Sigmoid colon (tissue), 7 donors: ENCODE measurements at regions of chr3 and their contacts with region 1.

Region 1: DNA sequence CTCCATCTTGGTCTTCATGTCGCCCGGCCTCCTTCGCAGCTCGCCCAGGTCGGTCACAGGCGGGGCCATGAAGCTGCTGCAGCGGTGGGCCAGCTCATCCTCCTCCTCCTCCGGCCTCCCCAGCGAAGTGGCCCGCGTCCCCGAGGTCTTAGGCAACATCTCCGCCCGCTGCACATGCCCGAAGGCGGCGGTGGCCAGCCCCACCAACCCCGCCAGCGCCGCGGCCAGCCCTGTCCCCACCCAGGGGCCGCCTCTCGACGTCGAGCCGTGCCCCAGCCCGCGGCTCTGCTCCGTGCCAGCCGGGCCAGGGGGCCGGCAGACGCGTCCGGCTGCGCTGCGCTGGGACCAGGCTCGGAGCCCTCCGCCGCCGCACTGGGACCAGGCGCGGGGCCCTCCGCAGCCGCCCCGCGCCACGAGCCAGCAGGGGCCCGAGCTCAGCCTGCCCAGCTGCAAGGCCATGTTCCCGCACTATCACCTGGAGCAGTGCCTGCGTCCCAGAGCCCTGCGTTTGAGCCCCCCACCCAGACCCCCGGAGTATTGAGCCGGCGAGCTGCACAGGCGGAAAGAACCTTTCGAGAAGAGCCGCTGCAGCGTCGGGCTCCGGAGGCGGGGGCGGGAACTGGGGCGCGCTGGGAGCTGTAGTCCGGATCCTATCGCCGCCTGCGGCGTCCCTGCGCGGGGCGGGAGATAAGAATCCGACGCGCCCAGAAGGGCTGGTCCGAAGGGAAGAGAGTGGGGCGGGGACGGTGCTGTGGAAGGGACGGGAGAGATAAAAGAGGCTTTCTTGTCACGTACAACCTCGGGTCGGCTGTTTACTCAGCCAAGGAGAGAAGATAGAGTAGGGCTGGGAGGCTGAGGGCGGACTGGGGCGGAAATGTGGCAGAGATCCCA is at the start of gene CPOX:
- DNase-seq: peak; percentile 92
- H3K4me3 ChIP-seq: peak within 1 kb of the TSS; percentile 70 to 87 (median 78)
- H3K27ac ChIP-seq: peak within 1 kb of the TSS; percentile 80 to 85 (median 82)
- H3K4me1 ChIP-seq: peaks cover 0 to 18% (median 14%) of the 10 kb centered on the region in 4 donors
- H3K27me3 ChIP-seq: no peaks in the 10 kb centered on the region
- CTCF ChIP-seq: no peak
- EP300 ChIP-seq: no peak
- POLR2A ChIP-seq: peak in 1 of 2 donors; percentile 17
- total RNA-seq, gene CPOX: 15.3 to 32.7 (median 17.3) TPM

Region 2: DNA sequence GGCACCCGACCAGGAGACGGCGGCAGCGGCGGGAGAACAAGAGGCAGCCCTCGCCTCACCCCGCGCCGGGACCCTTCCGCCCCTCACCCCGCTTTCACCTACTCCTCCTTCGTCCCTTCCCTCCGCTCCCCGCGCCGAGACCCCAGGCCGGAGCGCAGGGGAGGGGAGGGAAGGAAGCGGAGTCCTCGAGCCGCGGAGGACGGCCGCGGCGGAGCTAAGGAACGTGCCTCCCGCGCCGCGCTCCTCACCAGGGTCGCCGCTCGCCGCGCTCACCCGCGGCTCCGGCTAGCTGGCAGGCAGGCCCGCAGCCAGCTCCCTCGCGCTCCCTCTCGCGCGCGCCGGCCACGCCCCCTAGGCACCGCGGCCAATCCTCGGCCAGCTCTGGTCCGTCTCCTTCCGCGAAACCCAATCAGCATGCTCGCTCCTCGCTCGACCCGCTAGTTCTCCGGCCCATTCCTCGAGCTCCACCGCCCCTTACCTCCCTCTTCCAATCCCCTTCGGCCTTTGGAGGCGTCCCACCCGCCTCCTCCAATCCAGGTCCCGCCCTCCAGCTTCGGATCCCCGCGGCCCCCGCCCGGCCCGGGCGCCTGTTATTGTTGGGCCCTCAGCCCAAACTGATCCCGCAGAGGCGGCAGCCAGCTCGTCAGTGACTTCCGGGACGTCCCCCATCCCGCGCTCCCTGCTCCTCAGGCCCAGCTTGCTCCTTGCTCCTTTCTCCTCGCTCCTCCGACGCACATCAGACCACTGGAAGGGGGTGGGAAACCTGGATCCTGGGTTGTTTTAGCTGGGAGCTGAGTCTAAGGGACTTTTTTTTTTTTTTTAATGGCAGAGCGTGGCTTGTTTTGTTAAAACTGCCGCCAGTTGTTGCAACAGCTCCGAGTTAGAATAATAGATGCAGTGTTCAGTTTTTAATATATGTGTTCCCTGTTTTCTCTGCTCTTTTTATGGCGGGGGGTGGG is 308.4 kb after region 1 on chr3 and contains the start of gene DCBLD2:
- intact Hi-C with region 1: loop called (anchors 5 kb)
- DNase-seq: peak; percentile 99
- H3K4me3 ChIP-seq: peak within 1 kb of the TSS; percentile 93 to 98 (median 96)
- H3K27ac ChIP-seq: peak within 1 kb of the TSS; percentile 96 to 98 (median 96)
- H3K4me1 ChIP-seq: peaks cover 0 to 41% (median 25%) of the 10 kb centered on the region in 4 donors
- H3K27me3 ChIP-seq: no peaks in the 10 kb centered on the region
- CTCF ChIP-seq: no peak
- EP300 ChIP-seq: no peak
- POLR2A ChIP-seq: peak; percentile 45 to 73
- total RNA-seq, gene DCBLD2: 38.8 to 56.5 (median 51.3) TPM